T-cell (primary cell): ENCODE measurements at regions of chr3 and their contacts with region 1.

Region 1: DNA sequence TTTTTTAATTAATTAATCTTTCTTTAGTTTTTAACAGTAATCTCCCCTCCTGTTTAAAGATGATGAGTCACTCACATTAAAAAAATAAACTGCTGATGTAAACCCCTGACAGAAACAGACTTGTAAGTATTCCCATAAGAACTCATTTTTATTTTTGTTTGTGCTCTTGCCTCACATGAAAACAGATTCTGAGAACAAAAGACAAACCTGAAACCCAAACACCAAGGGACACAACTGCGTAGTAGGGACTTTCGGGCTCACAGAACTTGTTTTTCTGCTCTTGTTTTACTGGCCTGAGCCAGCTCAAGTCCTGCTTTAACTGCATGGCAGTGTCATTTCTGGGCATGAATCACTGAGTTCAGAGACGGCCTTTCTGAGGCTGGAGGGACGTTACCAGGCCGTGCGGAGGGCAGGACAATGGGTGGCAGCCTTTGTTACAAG is 600.8 kb downstream of the FOXP1 start:
- DNase-seq: peak in 6 of 35 experiments; percentile 3 to 48 (median 12)
- ATAC-seq: peak in 1 of 4 experiments; percentile 28
- H3K4me3 ChIP-seq: no peak overlapping the region
- H3K4me3 Mint-ChIP-seq: no peak overlapping the region
- H3K27ac ChIP-seq: peak overlapping the region; percentile 43
- H3K27ac Mint-ChIP-seq: peak overlapping the region; percentile 87 to 89
- H3K4me1 ChIP-seq: peaks cover 15 to 17% of the 10 kb centered on the region in 2 experiments
- H3K4me1 Mint-ChIP-seq: peaks cover 71% of the 10 kb centered on the region in 3 donors
- H3K27me3 ChIP-seq: no peaks in the 10 kb centered on the region
- H3K27me3 Mint-ChIP-seq: no peaks in the 10 kb centered on the region

Region 2: GRCh38 chr3:71018799-71019198 is 36.1 kb after region 1 on chr3:
- CTCF ChIA-PET with region 1: no interaction called
- POLR2A ChIA-PET with region 1: interaction called in 1 of 2 experiments, 14 read pairs
- DNase-seq: no peak
- ATAC-seq: no peak
- H3K4me3 ChIP-seq: no peak overlapping the region
- H3K4me3 Mint-ChIP-seq: no peak overlapping the region
- H3K27ac ChIP-seq: no peak overlapping the region
- H3K27ac Mint-ChIP-seq: peak overlapping the region; percentile 61 to 66
- H3K4me1 ChIP-seq: peaks cover 0 to 10% of the 10 kb centered on the region in 2 experiments
- H3K4me1 Mint-ChIP-seq: peaks cover 59 to 74% (median 74%) of the 10 kb centered on the region in 3 donors
- H3K27me3 ChIP-seq: no peaks in the 10 kb centered on the region
- H3K27me3 Mint-ChIP-seq: no peaks in the 10 kb centered on the region

Region 3: DNA sequence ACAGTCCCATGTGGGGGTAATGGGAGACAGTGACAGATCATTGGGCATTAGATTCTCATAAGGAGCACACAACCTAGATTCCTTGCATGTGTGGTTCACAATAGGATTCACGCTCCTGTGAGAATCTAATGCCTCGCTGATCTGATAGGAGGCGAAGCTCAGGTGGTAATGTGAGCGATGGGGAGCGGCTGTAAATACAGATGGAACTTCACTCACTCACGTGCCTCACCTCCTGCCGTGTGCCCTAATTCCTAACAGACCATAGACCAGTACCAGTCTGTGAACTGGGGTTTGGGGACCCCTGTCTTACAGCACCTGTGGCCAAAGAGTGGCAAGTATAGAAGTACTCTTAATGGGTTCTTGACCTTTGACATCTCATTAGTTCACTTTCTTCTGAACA is 46.1 kb after region 1 on chr3:
- CTCF ChIA-PET with region 1: no interaction called
- POLR2A ChIA-PET with region 1: interaction called in 1 of 2 experiments, 16 read pairs
- DNase-seq: no peak
- ATAC-seq: no peak
- H3K4me3 ChIP-seq: no peak overlapping the region
- H3K4me3 Mint-ChIP-seq: no peak overlapping the region
- H3K27ac ChIP-seq: no peak overlapping the region
- H3K27ac Mint-ChIP-seq: peak overlapping the region in 1 of 2 donors; percentile 59
- H3K4me1 ChIP-seq: peaks cover 6 to 15% of the 10 kb centered on the region in 2 experiments
- H3K4me1 Mint-ChIP-seq: peaks cover 91 to 93% (median 92%) of the 10 kb centered on the region in 3 donors
- H3K27me3 ChIP-seq: no peaks in the 10 kb centered on the region
- H3K27me3 Mint-ChIP-seq: no peaks in the 10 kb centered on the region

Region 4: DNA sequence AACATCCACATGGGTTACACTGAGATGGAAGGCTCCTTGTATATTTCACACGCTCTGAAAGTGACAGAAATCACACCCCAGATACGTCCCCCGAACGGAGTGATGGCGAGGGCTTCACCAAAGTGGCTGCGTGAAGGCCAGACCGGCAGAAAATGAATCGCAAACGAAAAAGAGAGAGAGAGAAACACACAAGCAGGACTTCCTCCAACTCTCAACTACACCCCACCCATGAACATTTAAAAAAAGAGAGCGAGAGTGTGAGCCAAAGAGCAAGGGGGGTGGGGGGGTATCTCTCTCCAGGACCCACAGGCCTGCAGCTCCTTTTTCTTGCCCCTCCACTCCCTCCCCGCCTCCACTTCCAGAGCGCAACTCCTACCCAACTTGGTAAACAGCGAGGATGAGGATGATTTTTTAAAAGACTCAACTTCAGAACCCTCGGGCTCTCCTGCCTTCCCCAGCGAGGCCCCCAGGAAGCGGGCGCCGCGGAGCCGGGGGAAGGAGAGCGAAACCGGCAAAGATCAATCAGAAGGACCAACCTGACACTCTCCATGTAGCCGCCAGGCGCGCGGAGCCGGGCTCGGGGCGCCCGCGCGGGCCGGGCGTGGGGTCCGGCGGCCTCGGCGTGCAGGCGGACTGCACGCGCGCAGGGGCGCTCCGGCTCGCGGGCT is 81.7 kb after region 1 on chr3:
- CTCF ChIA-PET with region 1: interaction called in 1 of 2 experiments, 12 read pairs
- POLR2A ChIA-PET with region 1: no interaction called
- DNase-seq: peak; percentile 54 to 82 (median 67)
- ATAC-seq: peak; percentile 58 to 63 (median 60)
- H3K4me3 ChIP-seq: peak overlapping the region; percentile 77 to 98
- H3K4me3 Mint-ChIP-seq: no peak overlapping the region
- H3K27ac ChIP-seq: peak overlapping the region; percentile 91
- H3K27ac Mint-ChIP-seq: no peak overlapping the region
- H3K4me1 ChIP-seq: peaks cover 38 to 72% of the 10 kb centered on the region in 2 experiments
- H3K4me1 Mint-ChIP-seq: peaks cover 36 to 67% (median 66%) of the 10 kb centered on the region in 3 donors
- H3K27me3 ChIP-seq: no peaks in the 10 kb centered on the region
- H3K27me3 Mint-ChIP-seq: no peaks in the 10 kb centered on the region

Region 5: DNA sequence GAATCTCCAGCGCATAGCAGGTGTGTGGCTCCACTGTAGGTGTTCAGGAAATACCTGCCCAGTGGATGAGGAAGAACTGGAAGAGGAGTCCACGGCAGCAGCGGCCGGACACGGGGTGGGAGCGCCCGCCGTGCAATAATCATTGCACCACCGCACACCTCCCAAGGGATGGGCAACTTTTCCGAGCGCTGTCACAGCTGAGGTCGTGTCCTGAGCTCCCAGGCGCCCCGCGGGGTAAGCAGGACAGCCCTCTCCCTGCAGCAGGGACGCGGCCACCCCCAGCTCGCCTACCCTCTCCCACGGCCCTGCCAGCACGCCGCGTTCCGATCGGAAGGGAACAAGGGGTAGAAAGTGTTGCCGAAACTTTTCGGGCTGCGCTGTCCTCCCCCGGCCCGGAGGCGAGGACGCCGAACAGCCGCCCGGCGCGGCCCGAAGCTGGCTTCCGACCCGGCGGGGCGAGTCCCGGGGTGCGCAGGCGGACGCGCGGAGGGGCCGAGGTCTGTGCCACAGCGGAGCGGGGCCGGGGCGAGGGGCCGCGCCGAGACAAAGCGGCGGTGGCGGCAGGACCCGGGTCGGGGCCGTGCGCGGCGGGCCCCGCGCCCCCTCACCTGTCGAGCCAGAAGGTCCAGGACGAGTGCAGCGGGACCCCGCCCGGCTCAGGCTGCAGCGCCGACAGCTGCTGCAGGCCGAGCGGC is 742.0 kb after region 1 on chr3:
- CTCF ChIA-PET with region 1: no interaction called
- POLR2A ChIA-PET with region 1: interaction called in 1 of 2 experiments, 13 read pairs
- DNase-seq: peak in 15 of 35 experiments; percentile 9 to 51 (median 34)
- ATAC-seq: peak; percentile 14 to 50 (median 40)
- H3K4me3 ChIP-seq: peak overlapping the region; percentile 66 to 94
- H3K4me3 Mint-ChIP-seq: peak overlapping the region; percentile 68 to 96 (median 94)
- H3K27ac ChIP-seq: peak overlapping the region; percentile 80
- H3K27ac Mint-ChIP-seq: peak overlapping the region; percentile 94 to 96
- H3K4me1 ChIP-seq: peaks cover 43 to 62% of the 10 kb centered on the region in 2 experiments
- H3K4me1 Mint-ChIP-seq: peaks cover 68 to 76% (median 75%) of the 10 kb centered on the region in 3 donors
- H3K27me3 ChIP-seq: no peaks in the 10 kb centered on the region
- H3K27me3 Mint-ChIP-seq: no peaks in the 10 kb centered on the region